ENCODE measurements at regions of chr1 and their contacts with region 1.

Region 1: GRCh38 chr1:196797891-196798290 is 21.6 kb upstream of the CFHR1 start:
- DNase-seq: no peak
- ATAC-seq: no peak
- H3K4me3 ChIP-seq: no peak overlapping the region
- H3K27ac ChIP-seq: no peak overlapping the region
- H3K4me1 ChIP-seq: no peaks in the 10 kb centered on the region
- H3K27me3 ChIP-seq: no peaks in the 10 kb centered on the region
- CTCF ChIP-seq: no peak
- POLR2A ChIP-seq: no peak

Region 2: DNA sequence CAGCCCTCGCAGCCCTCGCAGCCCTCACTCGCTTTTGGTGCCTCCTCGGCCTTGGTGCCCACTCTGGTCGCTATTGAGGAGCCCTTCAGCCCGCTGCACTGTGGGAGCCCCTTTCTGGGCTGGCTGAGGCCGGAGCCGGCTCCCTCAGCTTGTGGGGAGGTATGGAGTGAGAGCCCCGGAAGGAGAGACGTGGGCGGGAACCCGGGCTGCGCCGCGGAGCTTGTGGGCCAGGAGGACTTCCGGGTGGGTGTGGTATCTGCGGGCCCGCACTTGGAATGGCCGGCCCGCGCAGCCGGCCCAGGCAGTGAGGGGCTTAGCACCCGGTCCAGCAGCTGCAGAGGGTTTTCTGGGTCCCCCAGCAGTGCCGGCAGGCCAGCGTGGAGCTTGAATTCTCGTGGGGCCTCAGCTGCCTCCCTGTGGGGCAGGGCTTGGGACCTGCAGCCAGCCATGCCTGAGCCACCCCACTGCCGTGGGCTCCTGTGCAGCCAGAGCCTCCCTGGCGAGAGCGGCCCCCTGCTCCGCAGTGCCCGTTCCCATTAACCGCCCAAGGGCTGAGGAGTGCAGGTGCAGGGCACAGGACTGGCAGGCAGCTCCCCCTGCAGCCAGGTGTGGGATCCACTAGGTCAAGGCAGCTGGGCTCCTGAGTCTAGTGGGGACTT is 135.8 kb after region 1 on chr1:
- intact Hi-C with region 1: loop called in 1 of 10 experiments (anchors 10 kb)
- DNase-seq: peak in 1 of 5 donors; percentile 48
- ATAC-seq: peak in 1 of 4 donors; percentile 29
- H3K4me3 ChIP-seq: no peak overlapping the region
- H3K27ac ChIP-seq: no peak overlapping the region
- H3K4me1 ChIP-seq: no peaks in the 10 kb centered on the region
- H3K27me3 ChIP-seq: no peaks in the 10 kb centered on the region
- CTCF ChIP-seq: no peak
- POLR2A ChIP-seq: no peak